ENCODE measurements at regions of chr11 and their contacts with region 1.

Region 1: GRCh38 chr11:31045335-31045734 is 324.2 kb downstream of the DCDC1 start:
- DNase-seq: no peak
- ATAC-seq: peak; percentile 46; the same call in 1 of the 2 replicates
- H3K4me3 Mint-ChIP-seq: no peak overlapping the region
- H3K27ac Mint-ChIP-seq: no peak overlapping the region
- H3K4me1 Mint-ChIP-seq: peaks cover 16% of the 10 kb centered on the region
- H3K27me3 Mint-ChIP-seq: no peaks in the 10 kb centered on the region
- CTCF ChIP-seq: peak; percentile 21; the same call in 1 of the 2 replicates

Region 2: GRCh38 chr11:30960387-30960992 is 84.8 kb before region 1 on chr11:
- CTCF ChIA-PET with region 1: interaction called, 72 read pairs
- POLR2A ChIA-PET with region 1: no interaction called
- DNase-seq: no peak
- ATAC-seq: peak; percentile 74
- H3K4me3 Mint-ChIP-seq: no peak overlapping the region
- H3K27ac Mint-ChIP-seq: no peak overlapping the region
- H3K4me1 Mint-ChIP-seq: no peaks in the 10 kb centered on the region
- H3K27me3 Mint-ChIP-seq: no peaks in the 10 kb centered on the region; the same call in 1 of the 2 replicates
- CTCF ChIP-seq: no peak

Region 3: GRCh38 chr11:30992513-30992849 is 52.9 kb before region 1 on chr11:
- CTCF ChIA-PET with region 1: interaction called, 14 read pairs
- POLR2A ChIA-PET with region 1: no interaction called
- DNase-seq: no peak
- ATAC-seq: peak; percentile 88
- H3K4me3 Mint-ChIP-seq: no peak overlapping the region
- H3K27ac Mint-ChIP-seq: no peak overlapping the region
- H3K4me1 Mint-ChIP-seq: peaks cover 7% of the 10 kb centered on the region; the same call in 1 of the 2 replicates
- H3K27me3 Mint-ChIP-seq: no peaks in the 10 kb centered on the region
- CTCF ChIP-seq: no peak

Region 4: GRCh38 chr11:31114442-31114841 is 69.1 kb after region 1 on chr11:
- CTCF ChIA-PET with region 1: no interaction called
- POLR2A ChIA-PET with region 1: no interaction called
- DNase-seq: no peak
- ATAC-seq: no peak
- H3K4me3 Mint-ChIP-seq: no peak overlapping the region
- H3K27ac Mint-ChIP-seq: no peak overlapping the region
- H3K4me1 Mint-ChIP-seq: peaks cover 22% of the 10 kb centered on the region
- H3K27me3 Mint-ChIP-seq: no peaks in the 10 kb centered on the region
- CTCF ChIP-seq: no peak

Measured in WTC11 (cell line).